ENCODE measurements at regions of chr19 and their contacts with region 1.

Region 1: GRCh38 chr19:17390665-17391370 is 3.2 kb downstream of the CCDC194 start:
- DNase-seq: peak; percentile 83 to 86 (median 83)
- H3K4me3 ChIP-seq: peak overlapping the region; percentile 29 to 63
- H3K4me3 Mint-ChIP-seq: peak overlapping the region; percentile 88 to 94 (median 91)
- H3K27ac ChIP-seq: peak overlapping the region; percentile 34
- H3K27ac Mint-ChIP-seq: peak overlapping the region; percentile 30 to 94 (median 64)
- H3K4me1 ChIP-seq: peaks cover 27% of the 10 kb centered on the region
- H3K4me1 Mint-ChIP-seq: peaks cover 14 to 24% (median 19%) of the 10 kb centered on the region in 4 donors
- H3K27me3 ChIP-seq: no peaks in the 10 kb centered on the region
- H3K27me3 Mint-ChIP-seq: no peaks in the 10 kb centered on the region

Region 2: GRCh38 chr19:17069218-17069617 is 321.6 kb before region 1 on chr19:
- CTCF ChIA-PET with region 1: interaction called, 3 read pairs
- POLR2A ChIA-PET with region 1: no interaction called
- intact Hi-C with region 1: loop called (anchors 5 kb)
- DNase-seq: no peak
- H3K4me3 ChIP-seq: no peak overlapping the region
- H3K4me3 Mint-ChIP-seq: no peak overlapping the region
- H3K27ac ChIP-seq: no peak overlapping the region
- H3K27ac Mint-ChIP-seq: peak overlapping the region in 1 of 7 donors; percentile 8
- H3K4me1 ChIP-seq: peaks cover 28% of the 10 kb centered on the region
- H3K4me1 Mint-ChIP-seq: peaks cover 30 to 51% (median 39%) of the 10 kb centered on the region in 4 donors
- H3K27me3 ChIP-seq: no peaks in the 10 kb centered on the region
- H3K27me3 Mint-ChIP-seq: no peaks in the 10 kb centered on the region

Region 3: GRCh38 chr19:17292286-17293097 is 98.3 kb before region 1 on chr19:
- CTCF ChIA-PET with region 1: interaction called, 56 read pairs
- POLR2A ChIA-PET with region 1: interaction called, 7 read pairs
- intact Hi-C with region 1: loop called (anchors 1 kb)
- DNase-seq: peak; percentile 77 to 85 (median 80)
- H3K4me3 ChIP-seq: peak overlapping the region; percentile 61 to 75
- H3K4me3 Mint-ChIP-seq: peak overlapping the region; percentile 88 to 92 (median 90)
- H3K27ac ChIP-seq: peak overlapping the region; percentile 20
- H3K27ac Mint-ChIP-seq: peak overlapping the region; percentile 47 to 89 (median 81)
- H3K4me1 ChIP-seq: peaks cover 6% of the 10 kb centered on the region
- H3K4me1 Mint-ChIP-seq: peaks cover 3 to 5% (median 4%) of the 10 kb centered on the region in 4 donors
- H3K27me3 ChIP-seq: no peaks in the 10 kb centered on the region
- H3K27me3 Mint-ChIP-seq: peaks cover 0 to 4% of the 10 kb centered on the region in 2 donors

Region 4: GRCh38 chr19:17346109-17346671 is 44.6 kb before region 1 on chr19:
- CTCF ChIA-PET with region 1: interaction called, 24 read pairs
- POLR2A ChIA-PET with region 1: no interaction called
- intact Hi-C with region 1: loop called (anchors 1 kb)
- DNase-seq: peak in 4 of 5 donors; percentile 66 to 71 (median 68)
- H3K4me3 ChIP-seq: no peak overlapping the region
- H3K4me3 Mint-ChIP-seq: peak overlapping the region in 1 of 8 donors; percentile 29
- H3K27ac ChIP-seq: no peak overlapping the region
- H3K27ac Mint-ChIP-seq: peak overlapping the region in 1 of 7 donors; percentile 46
- H3K4me1 ChIP-seq: no peaks in the 10 kb centered on the region
- H3K4me1 Mint-ChIP-seq: peaks cover 5 to 7% (median 6%) of the 10 kb centered on the region in 4 donors
- H3K27me3 ChIP-seq: no peaks in the 10 kb centered on the region
- H3K27me3 Mint-ChIP-seq: peaks cover 10 to 11% of the 10 kb centered on the region in 2 donors

Region 5: GRCh38 chr19:17419621-17420466 is 29.0 kb after region 1 on chr19 and contains the start of gene MVB12A:
- CTCF ChIA-PET with region 1: interaction called, 15 read pairs
- POLR2A ChIA-PET with region 1: interaction called, 15 read pairs
- intact Hi-C with region 1: no loop called
- DNase-seq: peak; percentile 94 to 98 (median 97)
- H3K4me3 ChIP-seq: peak within 1 kb of the TSS; percentile 69 to 92
- H3K4me3 Mint-ChIP-seq: peak within 1 kb of the TSS; percentile 91 to 97 (median 94)
- H3K27ac ChIP-seq: peak within 1 kb of the TSS; percentile 67
- H3K27ac Mint-ChIP-seq: peak within 1 kb of the TSS; percentile 91 to 96 (median 93)
- H3K4me1 ChIP-seq: peaks cover 17% of the 10 kb centered on the region
- H3K4me1 Mint-ChIP-seq: peaks cover 13 to 26% (median 16%) of the 10 kb centered on the region in 4 donors
- H3K27me3 ChIP-seq: no peaks in the 10 kb centered on the region
- H3K27me3 Mint-ChIP-seq: no peaks in the 10 kb centered on the region
- total RNA-seq, gene MVB12A: 35.4 to 38.0 TPM

Region 6: DNA sequence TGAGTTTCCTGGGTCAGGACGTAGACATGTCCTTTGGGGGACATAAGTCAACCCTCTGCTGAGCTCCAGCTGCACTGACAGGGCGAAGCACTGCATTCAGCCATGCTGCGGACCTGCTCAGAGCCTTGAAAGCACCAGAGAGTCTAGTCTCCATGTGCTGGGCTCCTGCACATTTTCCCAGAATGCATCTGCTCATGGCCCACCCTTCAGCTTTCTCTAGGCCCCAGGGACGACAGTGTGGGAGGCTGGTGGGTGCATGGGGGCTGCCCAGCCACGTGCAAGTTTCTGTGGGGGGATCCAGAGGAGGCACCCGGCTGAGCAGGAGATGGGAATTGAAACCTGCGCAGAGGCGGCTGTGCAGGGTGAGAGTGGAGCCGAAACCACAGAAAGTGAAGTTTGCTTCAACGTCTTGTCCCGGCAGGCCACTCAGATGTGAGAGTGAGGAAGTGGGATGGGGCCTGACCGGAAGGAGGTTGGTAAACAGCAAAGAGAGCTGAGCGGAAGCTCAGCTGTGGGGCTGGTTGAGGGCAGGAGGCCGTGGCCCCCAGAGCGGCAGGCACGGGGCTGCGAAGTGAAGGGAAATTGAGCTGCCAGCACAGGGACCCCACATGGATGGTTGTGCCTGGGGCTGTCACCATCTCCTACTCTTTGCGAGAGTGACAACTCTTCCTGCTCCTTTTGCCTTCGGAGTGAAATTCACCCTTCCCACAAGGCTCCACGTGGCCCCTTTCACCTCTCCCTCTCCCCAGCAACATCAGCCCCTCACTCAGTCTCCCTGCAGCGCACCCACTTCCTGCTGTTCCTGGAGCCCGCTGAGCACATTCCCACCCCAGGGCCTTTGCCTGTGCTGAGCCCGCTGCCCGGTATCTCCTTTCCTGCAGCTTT is 132.4 kb after region 1 on chr19:
- CTCF ChIA-PET with region 1: no interaction called
- POLR2A ChIA-PET with region 1: no interaction called
- intact Hi-C with region 1: no loop called
- DNase-seq: peak in 3 of 5 donors; percentile 26 to 40 (median 37)
- H3K4me3 ChIP-seq: peak overlapping the region in 1 of 2 donors; percentile 20
- H3K4me3 Mint-ChIP-seq: peak overlapping the region; percentile 72 to 90 (median 79)
- H3K27ac ChIP-seq: peak overlapping the region; percentile 46
- H3K27ac Mint-ChIP-seq: peak overlapping the region; percentile 76 to 92 (median 89)
- H3K4me1 ChIP-seq: peaks cover 26% of the 10 kb centered on the region
- H3K4me1 Mint-ChIP-seq: peaks cover 13 to 29% (median 17%) of the 10 kb centered on the region in 4 donors
- H3K27me3 ChIP-seq: no peaks in the 10 kb centered on the region
- H3K27me3 Mint-ChIP-seq: no peaks in the 10 kb centered on the region

Region 7: GRCh38 chr19:17579661-17580244 is 188.9 kb after region 1 on chr19:
- CTCF ChIA-PET with region 1: interaction called, 4 read pairs
- POLR2A ChIA-PET with region 1: no interaction called
- intact Hi-C with region 1: loop called (anchors 1 kb)
- DNase-seq: peak in 2 of 5 donors; percentile 8 to 11
- H3K4me3 ChIP-seq: no peak overlapping the region
- H3K4me3 Mint-ChIP-seq: no peak overlapping the region
- H3K27ac ChIP-seq: no peak overlapping the region
- H3K27ac Mint-ChIP-seq: peak overlapping the region in 1 of 7 donors; percentile 84
- H3K4me1 ChIP-seq: no peaks in the 10 kb centered on the region
- H3K4me1 Mint-ChIP-seq: peaks cover 0 to 4% (median under 1%) of the 10 kb centered on the region in 4 donors
- H3K27me3 ChIP-seq: no peaks in the 10 kb centered on the region
- H3K27me3 Mint-ChIP-seq: no peaks in the 10 kb centered on the region